Right ventricle myocardium superior (tissue), 1 donor: ENCODE measurements at regions of chr10 and their contacts with region 1.

Region 1: GRCh38 chr10:86899670-86900276 is 57.6 kb downstream of the MMRN2 start:
- DNase-seq: no peak
- ATAC-seq: peak; percentile 73

Region 2: DNA sequence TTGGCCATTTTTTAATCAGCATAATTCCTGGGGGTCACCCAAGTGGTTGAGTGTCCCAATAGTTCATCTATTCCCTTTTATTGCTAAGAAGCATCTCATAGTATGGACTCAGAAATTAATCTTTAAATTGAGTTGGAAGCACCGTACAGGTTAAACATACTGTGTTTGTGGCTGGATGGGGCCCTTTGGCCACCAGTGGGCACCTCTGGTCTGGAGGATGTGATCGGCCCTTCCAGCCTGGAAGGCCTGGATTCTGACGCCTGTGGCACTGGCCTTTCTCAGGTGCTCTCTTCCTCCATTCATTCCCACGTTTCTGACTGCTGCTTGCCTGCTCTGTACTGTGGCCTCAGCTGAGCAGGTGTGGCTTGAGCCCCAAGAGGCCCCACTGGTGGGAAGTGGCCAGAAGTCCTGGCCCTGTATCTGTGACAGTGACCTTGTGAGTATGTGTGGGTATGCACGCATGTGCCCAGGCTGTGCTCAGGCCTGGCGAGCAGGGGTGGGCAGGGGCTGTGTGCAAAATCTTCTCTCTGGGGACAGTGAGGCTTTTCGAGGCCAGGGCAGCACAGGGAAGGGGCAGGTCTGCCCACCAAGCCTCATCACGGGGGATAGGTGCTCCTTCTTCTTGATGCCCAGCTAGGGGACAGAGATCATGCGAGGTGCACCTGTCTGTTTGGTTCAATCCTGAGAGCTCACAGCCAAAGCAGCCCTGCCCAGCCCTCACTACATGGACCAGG is 201.4 kb before region 1 on chr10:
- intact Hi-C with region 1: loop called (anchors 5 kb)
- DNase-seq: no peak
- ATAC-seq: no peak

Region 3: DNA sequence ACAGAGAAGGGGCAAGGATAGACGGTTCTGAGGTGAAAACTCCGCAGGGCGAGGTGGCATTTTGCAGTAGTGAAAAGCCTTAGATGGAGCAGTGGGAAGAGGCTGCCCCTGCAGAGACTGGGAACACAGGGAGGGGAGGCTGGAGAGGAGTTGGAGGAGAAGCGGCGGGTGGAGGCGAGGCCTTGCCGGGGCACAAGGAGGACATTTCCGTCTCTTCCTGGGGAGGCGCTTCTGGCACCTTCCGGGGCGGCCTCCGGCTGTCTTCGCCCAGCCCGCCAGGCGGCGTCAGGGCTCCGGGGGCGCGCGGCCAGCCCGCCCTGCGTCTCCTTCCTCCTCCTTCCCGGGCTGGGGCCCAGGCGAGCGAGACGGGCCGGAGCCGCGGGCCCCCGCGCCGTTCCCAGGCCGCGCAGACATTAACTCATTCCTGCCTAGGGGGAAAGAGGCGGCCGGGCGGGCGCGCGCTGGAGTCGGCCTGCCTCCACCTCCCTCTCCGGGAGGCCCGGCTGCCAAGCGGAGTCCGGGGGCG is 188.7 kb before region 1 on chr10:
- intact Hi-C with region 1: loop called (anchors 5 kb)
- DNase-seq: peak; percentile 92
- ATAC-seq: peak; percentile 77